ENCODE measurements at regions of chr1 and their contacts with region 1.

Region 1: GRCh38 chr1:8182034-8182761 is 135.7 kb upstream of the SLC45A1 start:
- DNase-seq: peak; percentile 26
- H3K4me3 Mint-ChIP-seq: peak overlapping the region; percentile 53
- H3K27ac Mint-ChIP-seq: peak overlapping the region; percentile 70
- H3K4me1 Mint-ChIP-seq: peaks cover 21% of the 10 kb centered on the region
- H3K27me3 Mint-ChIP-seq: peaks cover 7% of the 10 kb centered on the region

Region 2: DNA sequence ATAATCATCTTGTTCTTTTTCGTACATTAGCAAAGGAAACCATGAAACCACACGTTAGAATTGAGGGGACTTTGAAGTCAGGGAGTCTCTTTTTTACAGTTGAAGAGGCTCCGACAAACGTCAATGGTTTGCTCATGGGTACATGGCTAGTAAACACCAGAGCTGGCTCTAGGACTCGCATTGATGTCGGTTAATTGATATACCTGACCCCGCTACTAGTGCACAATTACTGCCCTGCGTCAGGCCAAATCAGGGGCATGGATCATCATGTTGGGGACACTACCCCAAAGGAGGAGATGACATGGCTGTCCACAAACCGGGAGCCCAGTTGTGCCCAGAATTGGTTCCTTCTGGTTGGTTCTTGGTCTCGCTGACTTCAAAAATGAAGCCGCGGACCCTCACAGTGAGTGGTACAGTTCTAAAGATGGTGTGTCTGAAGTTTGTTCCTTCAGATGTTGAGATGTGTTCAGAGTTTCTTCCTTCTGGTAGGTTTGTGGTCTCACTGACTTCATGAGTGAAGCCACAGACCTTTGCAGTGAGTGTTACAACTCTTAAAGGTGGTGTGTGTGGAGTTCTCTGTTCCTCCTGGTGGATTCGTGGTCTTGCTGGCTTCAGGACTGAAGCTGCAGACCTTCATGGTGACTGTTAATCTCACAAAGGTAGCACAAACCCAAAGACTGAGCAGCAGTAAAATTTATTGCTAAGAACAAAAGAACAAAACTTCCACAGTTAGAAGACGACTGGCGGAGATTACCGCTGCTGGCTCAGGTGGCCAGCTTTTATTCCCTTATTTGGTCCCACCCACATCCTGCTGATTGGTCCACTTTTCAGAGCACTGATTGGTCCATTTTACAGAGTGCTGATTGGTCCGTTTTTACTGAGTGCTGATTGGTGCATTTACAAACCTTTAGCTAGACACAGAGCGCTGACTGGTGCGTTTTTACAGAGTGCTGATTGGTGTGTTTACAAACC is 29.2 kb before region 1 on chr1:
- intact Hi-C with region 1: loop called (anchors 1 kb)
- DNase-seq: peak; percentile 41
- H3K4me3 Mint-ChIP-seq: peak overlapping the region; percentile 74
- H3K27ac Mint-ChIP-seq: peak overlapping the region; percentile 93
- H3K4me1 Mint-ChIP-seq: peaks cover 41% of the 10 kb centered on the region
- H3K27me3 Mint-ChIP-seq: peaks cover 26% of the 10 kb centered on the region

Region 3: GRCh38 chr1:8169364-8170058 is 12.7 kb before region 1 on chr1:
- intact Hi-C with region 1: loop called (anchors 1 kb)
- DNase-seq: peak; percentile 38
- H3K4me3 Mint-ChIP-seq: peak overlapping the region; percentile 25
- H3K27ac Mint-ChIP-seq: peak overlapping the region; percentile 90
- H3K4me1 Mint-ChIP-seq: peaks cover 25% of the 10 kb centered on the region
- H3K27me3 Mint-ChIP-seq: peaks cover 3% of the 10 kb centered on the region